Activated CD4-positive, alpha-beta T cell treated with anti-CD3 and anti-CD28 coated beads, Interleukin-2, amount 10 ng/mL, durations not matched to agents 24 days and 14 days (primary cell): ENCODE measurements at regions of chr19 and their contacts with region 1.

Region 1: GRCh38 chr19:48321622-48322591 is 3.4 kb upstream of the EMP3 start:
- DNase-seq: peak; percentile 100
- H3K4me3 Mint-ChIP-seq: peak overlapping the region; percentile 95
- H3K27ac Mint-ChIP-seq: peak overlapping the region; percentile 99
- H3K4me1 Mint-ChIP-seq: peaks cover 58% of the 10 kb centered on the region
- H3K27me3 Mint-ChIP-seq: no peaks in the 10 kb centered on the region

Region 2: GRCh38 chr19:48333467-48334384 is 11.8 kb after region 1 on chr19:
- intact Hi-C with region 1: loop called (anchors 1 kb)
- DNase-seq: peak; percentile 98
- H3K4me3 Mint-ChIP-seq: peak overlapping the region; percentile 91
- H3K27ac Mint-ChIP-seq: peak overlapping the region; percentile 90
- H3K4me1 Mint-ChIP-seq: peaks cover 52% of the 10 kb centered on the region
- H3K27me3 Mint-ChIP-seq: no peaks in the 10 kb centered on the region

Region 3: DNA sequence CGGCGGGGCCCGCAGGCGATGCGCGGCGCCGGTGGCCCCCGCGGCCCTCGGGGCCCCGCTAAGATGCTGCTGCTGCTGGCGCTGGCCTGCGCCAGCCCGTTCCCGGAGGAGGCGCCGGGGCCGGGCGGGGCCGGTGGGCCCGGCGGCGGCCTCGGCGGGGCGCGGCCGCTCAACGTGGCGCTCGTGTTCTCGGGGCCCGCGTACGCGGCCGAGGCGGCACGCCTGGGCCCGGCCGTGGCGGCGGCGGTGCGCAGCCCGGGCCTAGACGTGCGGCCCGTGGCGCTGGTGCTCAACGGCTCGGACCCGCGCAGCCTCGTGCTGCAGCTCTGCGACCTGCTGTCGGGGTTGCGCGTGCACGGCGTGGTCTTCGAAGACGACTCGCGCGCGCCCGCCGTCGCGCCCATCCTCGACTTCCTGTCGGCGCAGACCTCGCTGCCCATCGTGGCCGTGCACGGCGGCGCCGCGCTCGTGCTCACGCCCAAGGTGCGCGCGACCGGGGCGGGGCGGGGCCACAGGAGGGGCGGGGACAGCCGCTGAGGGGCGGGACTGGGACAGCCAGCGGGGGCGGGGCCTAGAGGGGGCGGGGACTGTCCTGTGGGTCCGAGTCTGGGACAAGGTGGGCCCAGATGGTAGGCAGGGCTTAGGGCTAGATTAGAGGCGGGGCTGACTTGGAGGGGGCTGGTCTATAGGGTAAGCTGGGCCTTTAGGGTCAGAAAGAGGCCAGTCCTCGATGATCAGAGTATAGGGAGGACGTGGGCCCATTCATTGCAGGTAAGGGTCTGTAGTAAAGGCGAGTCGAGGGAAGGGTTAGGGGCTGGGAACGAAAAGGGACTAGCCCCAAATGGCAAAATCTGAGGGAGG is 76.7 kb after region 1 on chr19:
- intact Hi-C with region 1: loop called (anchors 2 kb)
- DNase-seq: peak; percentile 96
- H3K4me3 Mint-ChIP-seq: peak overlapping the region; percentile 94
- H3K27ac Mint-ChIP-seq: peak overlapping the region; percentile 64
- H3K4me1 Mint-ChIP-seq: peaks cover 36% of the 10 kb centered on the region
- H3K27me3 Mint-ChIP-seq: peaks cover 35% of the 10 kb centered on the region

Region 4: DNA sequence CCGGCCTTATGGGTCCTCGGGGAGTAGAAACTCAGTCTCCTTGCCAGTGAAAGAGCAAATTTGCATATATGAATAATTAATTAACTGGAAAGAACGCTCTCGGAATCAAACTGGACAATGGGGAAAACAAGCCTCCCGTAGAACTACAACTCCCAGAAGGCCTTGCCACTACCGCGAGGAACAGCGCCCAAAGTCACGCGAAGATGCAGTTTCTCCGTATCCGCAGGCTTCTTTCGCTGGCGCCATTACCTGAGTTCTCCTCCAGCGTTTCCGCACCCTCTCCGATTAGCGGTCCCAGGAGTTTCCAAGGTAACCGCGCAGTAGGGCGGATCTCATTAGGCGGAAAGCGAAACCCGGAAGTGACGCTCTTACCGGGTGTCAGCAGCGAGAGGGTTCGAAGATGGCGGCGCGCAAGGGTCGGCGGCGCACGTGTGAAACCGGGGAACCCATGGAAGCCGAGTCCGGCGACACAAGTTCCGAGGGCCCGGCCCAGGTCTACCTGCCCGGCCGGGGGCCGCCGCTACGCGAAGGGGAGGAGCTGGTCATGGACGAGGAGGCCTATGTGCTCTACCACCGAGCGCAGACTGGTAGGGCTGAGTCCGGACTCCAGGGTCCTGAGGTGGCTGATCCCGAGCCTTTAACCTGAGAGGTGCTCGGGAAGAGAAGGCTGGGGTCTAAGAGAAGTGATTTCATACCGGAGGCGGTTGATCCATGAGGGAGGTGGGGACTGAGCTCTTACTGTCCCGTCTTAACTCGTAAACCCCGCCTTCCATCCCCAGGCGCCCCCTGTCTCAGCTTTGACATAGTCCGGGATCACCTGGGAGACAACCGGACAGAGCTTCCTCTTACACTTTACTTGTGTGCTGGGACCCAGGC is 123.9 kb after region 1 on chr19 and contains the start of gene GRWD1:
- intact Hi-C with region 1: loop called (anchors 1 kb)
- DNase-seq: peak; percentile 98
- H3K4me3 Mint-ChIP-seq: peak within 1 kb of the TSS; percentile 96
- H3K27ac Mint-ChIP-seq: peak within 1 kb of the TSS; percentile 97
- H3K4me1 Mint-ChIP-seq: peaks cover 23% of the 10 kb centered on the region
- H3K27me3 Mint-ChIP-seq: peaks cover 25% of the 10 kb centered on the region
- total RNA-seq, gene GRWD1: 89.1 and 90.6 TPM in 2 replicates

Region 5: GRCh38 chr19:48468775-48469288 is 146.9 kb after region 1 on chr19:
- intact Hi-C with region 1: loop called (anchors 5 kb)
- DNase-seq: peak; percentile 100
- H3K4me3 Mint-ChIP-seq: peak overlapping the region; percentile 93
- H3K27ac Mint-ChIP-seq: peak overlapping the region; percentile 94
- H3K4me1 Mint-ChIP-seq: peaks cover 13% of the 10 kb centered on the region
- H3K27me3 Mint-ChIP-seq: no peaks in the 10 kb centered on the region

Region 6: DNA sequence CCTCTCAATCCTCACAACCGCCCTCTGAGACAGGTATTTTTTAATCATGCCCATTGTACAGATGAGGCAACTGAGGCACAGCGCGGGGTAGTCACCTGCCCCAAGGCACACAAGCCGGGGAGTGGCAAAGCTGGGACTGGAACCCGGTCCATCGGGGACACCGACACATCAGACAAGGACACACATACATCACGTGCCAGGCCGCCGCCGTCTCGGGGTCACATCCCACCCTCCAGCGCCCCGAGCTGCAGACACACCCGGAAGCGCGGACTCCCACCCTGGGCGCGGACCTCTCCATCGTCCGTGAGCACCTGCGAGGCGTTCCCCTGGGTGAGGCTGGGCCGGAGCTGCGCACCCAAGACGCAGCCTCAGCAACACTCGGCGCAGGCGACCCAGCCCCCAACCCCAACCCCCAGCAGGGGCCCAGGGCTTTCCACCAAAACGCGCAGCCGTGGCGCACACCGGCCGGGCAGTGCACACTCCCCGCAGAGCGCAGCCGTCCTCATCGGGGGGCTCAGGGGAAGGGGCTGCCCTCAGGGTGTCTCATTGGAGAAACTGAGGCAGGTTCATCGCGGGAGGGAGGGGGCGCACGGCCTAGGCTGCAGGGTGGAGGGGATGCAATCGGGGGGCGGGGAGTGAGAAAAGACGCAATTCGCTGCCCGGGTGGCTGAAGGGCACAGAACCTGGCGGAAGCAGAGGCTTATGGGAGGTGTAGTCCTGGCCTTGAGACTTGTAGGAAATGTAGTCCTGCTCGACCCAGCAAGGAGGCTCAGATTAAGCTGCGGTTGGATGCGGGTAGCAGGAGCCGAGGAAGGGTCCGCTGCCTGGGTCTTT is 191.6 kb after region 1 on chr19:
- intact Hi-C with region 1: loop called (anchors 5 kb)
- DNase-seq: peak; percentile 92
- H3K4me3 Mint-ChIP-seq: no peak overlapping the region
- H3K27ac Mint-ChIP-seq: peak overlapping the region; percentile 67
- H3K4me1 Mint-ChIP-seq: peaks cover 10% of the 10 kb centered on the region
- H3K27me3 Mint-ChIP-seq: no peaks in the 10 kb centered on the region